ENCODE measurements at regions of chr1 and their contacts with region 1.

Region 1: GRCh38 chr1:39672551-39672947 is 642 bp upstream of the NT5C1A start:
- DNase-seq: peak; percentile 53
- ATAC-seq: peak; percentile 43
- H3K4me3 Mint-ChIP-seq: peak overlapping the region; percentile 58
- H3K27ac Mint-ChIP-seq: no peak overlapping the region
- H3K4me1 Mint-ChIP-seq: peaks cover 13% of the 10 kb centered on the region
- H3K27me3 Mint-ChIP-seq: peaks cover 36% of the 10 kb centered on the region
- CTCF ChIP-seq: peak; percentile 66

Region 2: DNA sequence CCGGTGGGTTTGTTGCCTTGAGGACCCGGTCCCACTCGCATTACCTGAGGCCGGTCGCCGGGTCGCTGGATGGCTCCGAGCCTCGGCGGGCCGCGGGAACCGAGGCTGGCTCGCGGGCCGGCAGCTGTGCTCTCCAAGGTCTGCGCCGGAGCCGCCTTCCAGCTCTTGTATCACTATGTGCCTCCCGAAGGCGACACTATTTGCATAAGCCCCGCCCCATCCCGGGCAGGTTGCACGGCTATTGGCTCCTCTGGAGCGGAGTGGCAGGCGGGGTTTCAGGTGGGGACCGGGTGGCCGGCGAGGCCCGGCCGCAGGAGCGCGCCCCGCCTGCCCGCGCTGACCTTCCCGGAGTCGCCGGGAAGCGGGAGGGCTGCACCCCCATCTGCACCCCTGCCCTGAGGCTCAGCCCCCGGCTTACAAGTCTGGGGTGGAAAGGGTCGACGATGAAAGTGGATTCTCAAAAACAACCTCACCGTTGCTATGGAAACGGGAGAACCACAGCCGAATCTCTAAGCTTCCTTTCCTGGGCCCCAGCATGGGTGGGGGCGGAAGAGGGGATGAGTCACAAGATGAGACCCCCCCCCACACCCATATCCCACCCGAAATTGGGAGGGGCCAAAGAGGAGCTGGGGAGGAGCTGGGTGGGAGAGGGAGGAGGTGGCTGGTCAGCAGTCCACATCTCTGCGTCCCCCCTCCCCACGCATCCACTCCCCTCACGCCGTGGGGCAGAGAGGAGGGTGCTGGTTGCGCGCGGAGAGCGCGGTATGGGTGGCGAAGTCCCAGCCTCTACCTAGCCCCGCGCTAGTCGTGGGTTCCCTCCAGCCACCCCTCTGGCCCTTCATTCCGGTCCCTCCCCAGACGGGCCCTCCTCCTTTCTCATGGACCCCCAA is 19.0 kb after region 1 on chr1 and contains the start of gene HPCAL4:
- CTCF ChIA-PET with region 1: interaction called, 29 read pairs
- POLR2A ChIA-PET with region 1: interaction called, 33 read pairs
- intact Hi-C with region 1: no loop called
- DNase-seq: peak; percentile 93
- ATAC-seq: peak; percentile 94
- H3K4me3 Mint-ChIP-seq: peak within 1 kb of the TSS; percentile 76
- H3K27ac Mint-ChIP-seq: no peak within 1 kb of the TSS
- H3K4me1 Mint-ChIP-seq: peaks cover 34% of the 10 kb centered on the region
- H3K27me3 Mint-ChIP-seq: peaks cover 25% of the 10 kb centered on the region
- CTCF ChIP-seq: no peak
- total RNA-seq, gene HPCAL4: 2.8 to 3.0 TPM

Region 3: GRCh38 chr1:39701049-39701439 is 28.5 kb after region 1 on chr1:
- CTCF ChIA-PET with region 1: interaction called, 14 read pairs
- POLR2A ChIA-PET with region 1: interaction called, 4 read pairs
- intact Hi-C with region 1: no loop called
- DNase-seq: no peak
- ATAC-seq: no peak
- H3K4me3 Mint-ChIP-seq: no peak overlapping the region
- H3K27ac Mint-ChIP-seq: no peak overlapping the region
- H3K4me1 Mint-ChIP-seq: no peaks in the 10 kb centered on the region
- H3K27me3 Mint-ChIP-seq: peaks cover 14% of the 10 kb centered on the region
- CTCF ChIP-seq: no peak

Region 4: DNA sequence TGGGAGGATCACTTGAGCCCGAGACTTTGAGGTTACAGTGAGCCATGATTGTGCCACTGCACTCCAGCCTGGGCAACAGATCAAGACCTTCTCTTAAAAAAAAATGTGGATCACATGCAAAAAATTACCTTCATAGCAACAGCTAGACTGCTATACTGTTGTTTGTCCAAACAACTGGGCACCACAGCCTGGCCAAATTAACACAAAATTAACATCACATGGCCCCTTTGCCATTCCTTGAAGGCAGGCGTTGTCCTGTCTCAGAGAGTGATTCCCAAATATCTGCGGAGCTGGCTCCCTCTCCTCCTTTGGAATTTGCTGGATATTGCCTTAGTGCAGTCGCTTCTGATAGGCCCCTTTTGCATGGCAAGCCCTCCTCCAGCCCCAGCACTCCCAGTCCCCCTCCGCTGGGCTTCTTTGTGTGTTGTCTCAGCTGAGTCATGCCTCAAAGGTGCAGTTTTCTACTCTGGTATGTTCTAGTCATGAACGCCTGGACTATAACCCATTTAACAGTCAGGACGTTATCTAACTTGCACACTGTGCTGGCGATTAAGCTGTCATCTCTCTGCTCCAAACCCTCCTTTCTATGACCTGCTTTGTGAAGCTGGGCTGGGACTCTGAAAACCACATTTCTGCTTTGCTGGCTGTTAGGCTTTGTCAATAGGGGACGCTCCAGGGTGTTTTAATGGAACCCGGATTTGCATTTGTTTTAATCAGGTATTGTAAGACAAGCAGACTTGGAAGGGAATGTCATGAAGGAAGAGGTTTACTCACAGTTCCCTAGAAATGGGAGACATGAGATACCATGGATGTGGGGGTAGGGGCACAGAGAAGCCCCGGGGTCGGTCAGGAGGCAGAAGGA is 38.8 kb after region 1 on chr1:
- CTCF ChIA-PET with region 1: interaction called, 11 read pairs
- POLR2A ChIA-PET with region 1: no interaction called
- intact Hi-C with region 1: no loop called
- DNase-seq: no peak
- ATAC-seq: no peak
- H3K4me3 Mint-ChIP-seq: no peak overlapping the region
- H3K27ac Mint-ChIP-seq: no peak overlapping the region
- H3K4me1 Mint-ChIP-seq: no peaks in the 10 kb centered on the region
- H3K27me3 Mint-ChIP-seq: peaks cover 18% of the 10 kb centered on the region
- CTCF ChIP-seq: no peak

Region 5: GRCh38 chr1:39720094-39720999 is 47.8 kb after region 1 on chr1:
- CTCF ChIA-PET with region 1: interaction called, 30 read pairs
- POLR2A ChIA-PET with region 1: no interaction called
- intact Hi-C with region 1: loop called (anchors 5 kb)
- DNase-seq: no peak
- ATAC-seq: peak; percentile 56
- H3K4me3 Mint-ChIP-seq: no peak overlapping the region
- H3K27ac Mint-ChIP-seq: no peak overlapping the region
- H3K4me1 Mint-ChIP-seq: no peaks in the 10 kb centered on the region
- H3K27me3 Mint-ChIP-seq: peaks cover 41% of the 10 kb centered on the region
- CTCF ChIP-seq: peak; percentile 61